Lower leg skin (tissue), 4 donors: ENCODE measurements at regions of chr10 and their contacts with region 1.

Region 1: GRCh38 chr10:52488606-52489485 is 174.8 kb downstream of the DKK1 start:
- DNase-seq: no peak
- H3K4me3 ChIP-seq: no peak overlapping the region
- CTCF ChIP-seq: no peak
- POLR2A ChIP-seq: no peak

Region 2: GRCh38 chr10:52313933-52314816 is 174.7 kb before region 1 on chr10 and contains the start of gene DKK1:
- intact Hi-C with region 1: loop called (anchors 10 kb)
- DNase-seq: peak; percentile 61 to 90
- H3K4me3 ChIP-seq: peak within 1 kb of the TSS; percentile 31
- CTCF ChIP-seq: peak in 1 of 3 donors; percentile 27
- POLR2A ChIP-seq: peak in 1 of 2 donors; percentile 2
- total RNA-seq, gene DKK1: 27.7 to 68.9 (median 35.5) TPM